ENCODE measurements at regions of chr2 and their contacts with region 1.

Region 1: DNA sequence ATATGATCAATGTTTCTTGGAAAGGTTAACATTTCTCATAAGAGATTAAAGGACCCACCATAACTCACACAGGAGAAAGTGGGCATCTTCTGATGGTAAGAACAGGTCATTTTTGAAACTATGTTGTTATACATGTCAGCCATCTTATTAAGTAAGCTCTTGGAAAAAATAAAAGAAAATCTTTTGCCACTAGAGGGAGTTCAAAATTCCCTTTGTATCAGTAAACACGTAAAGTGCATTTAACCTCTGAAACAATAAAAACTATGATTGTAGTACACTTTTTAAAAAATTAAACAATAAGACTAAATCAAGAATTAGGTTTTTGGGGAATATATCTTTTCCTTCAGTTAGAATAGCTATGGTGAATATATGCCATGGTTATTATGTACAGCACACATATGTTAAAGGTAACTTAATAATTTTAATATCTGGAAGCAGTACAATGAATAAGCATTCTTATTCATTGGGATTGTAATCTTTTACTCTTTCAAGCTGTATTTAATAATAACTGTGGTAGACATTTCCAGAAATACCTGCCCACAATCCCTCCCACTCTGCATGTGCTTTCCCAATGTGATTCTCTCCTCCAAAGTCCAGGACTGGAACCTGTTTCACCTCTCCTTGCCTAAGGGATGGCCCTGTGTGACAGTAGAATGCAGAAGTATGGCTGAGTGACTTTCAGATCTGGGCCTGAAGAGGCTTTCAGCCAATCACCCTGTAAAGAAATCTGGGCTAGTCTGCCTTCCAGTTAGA is 64.2 kb downstream of the RBMS1 start:
- DNase-seq: peak in 6 of 9 donors; percentile 44 to 67 (median 58)
- ATAC-seq: peak; percentile 70
- H3K4me3 ChIP-seq: no peak overlapping the region
- H3K4me3 Mint-ChIP-seq: peak overlapping the region in 6 of 10 donors; percentile 7 to 94 (median 30)
- H3K27ac ChIP-seq: peak overlapping the region; percentile 69
- H3K27ac Mint-ChIP-seq: peak overlapping the region; percentile 51 to 93 (median 89)
- H3K4me1 ChIP-seq: peaks cover 33 to 35% of the 10 kb centered on the region in 2 donors
- H3K4me1 Mint-ChIP-seq: peaks cover 32 to 91% (median 74%) of the 10 kb centered on the region in 7 donors
- H3K27me3 ChIP-seq: no peaks in the 10 kb centered on the region
- H3K27me3 Mint-ChIP-seq: no peaks in the 10 kb centered on the region

Region 2: DNA sequence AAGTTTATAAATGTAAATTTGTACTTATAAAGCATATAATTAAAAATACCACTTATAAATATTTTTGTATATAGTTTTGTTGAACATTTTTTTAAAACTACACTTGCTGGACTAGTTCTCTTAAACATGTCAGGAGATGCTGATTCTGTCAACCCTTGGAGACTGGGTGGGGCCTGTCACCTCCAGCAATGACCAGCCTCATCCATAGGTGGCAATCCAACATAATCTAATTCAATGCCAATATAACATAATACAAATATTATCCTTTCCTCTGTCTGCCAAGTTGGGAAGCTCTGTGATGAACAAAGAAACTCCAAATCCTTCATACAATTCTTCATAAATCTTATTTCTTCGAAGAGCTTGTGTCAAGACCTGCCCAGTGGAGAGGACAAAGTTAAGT is 76.3 kb before region 1 on chr2:
- CTCF ChIA-PET with region 1: interaction called, 8 read pairs
- POLR2A ChIA-PET with region 1: no interaction called
- intact Hi-C with region 1: loop called in 1 of 2 experiments (anchors 5 kb)
- DNase-seq: peak in 6 of 9 donors; percentile 14 to 45 (median 24)
- ATAC-seq: peak; percentile 72
- H3K4me3 ChIP-seq: no peak overlapping the region
- H3K4me3 Mint-ChIP-seq: peak overlapping the region in 1 of 10 donors; percentile 36
- H3K27ac ChIP-seq: no peak overlapping the region
- H3K27ac Mint-ChIP-seq: peak overlapping the region in 4 of 9 donors; percentile 51 to 81 (median 66)
- H3K4me1 ChIP-seq: peaks cover 0 to 5% of the 10 kb centered on the region in 2 donors
- H3K4me1 Mint-ChIP-seq: peaks cover 47 to 91% (median 83%) of the 10 kb centered on the region in 7 donors
- H3K27me3 ChIP-seq: no peaks in the 10 kb centered on the region
- H3K27me3 Mint-ChIP-seq: no peaks in the 10 kb centered on the region

Region 3: DNA sequence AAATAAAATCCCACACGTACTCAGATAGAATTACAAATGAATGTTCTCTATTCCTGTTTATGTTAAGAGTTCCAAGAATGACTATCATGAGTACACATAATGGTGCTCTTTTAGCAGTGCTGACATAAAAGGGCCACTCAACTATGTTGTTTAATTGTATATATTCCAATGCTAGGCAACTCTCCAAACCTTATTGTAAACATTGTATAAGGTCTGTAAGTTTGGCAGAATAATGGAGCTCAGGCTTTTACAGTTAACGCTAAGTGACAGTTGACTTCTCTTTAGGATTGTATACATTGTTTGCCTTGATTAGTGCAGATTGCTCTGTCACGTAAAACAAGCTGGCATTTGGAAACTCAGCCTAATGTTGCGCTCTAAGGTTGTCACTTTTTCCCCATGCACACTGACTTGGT is 43.4 kb after region 1 on chr2:
- CTCF ChIA-PET with region 1: interaction called, 4 read pairs
- POLR2A ChIA-PET with region 1: interaction called, 5 read pairs
- intact Hi-C with region 1: loop called in 1 of 2 experiments (anchors 2 kb)
- DNase-seq: peak in 1 of 9 donors; percentile 19
- ATAC-seq: no peak
- H3K4me3 ChIP-seq: no peak overlapping the region
- H3K4me3 Mint-ChIP-seq: peak overlapping the region in 9 of 10 donors; percentile 40 to 77 (median 64)
- H3K27ac ChIP-seq: peak overlapping the region; percentile 70
- H3K27ac Mint-ChIP-seq: peak overlapping the region; percentile 78 to 98 (median 90)
- H3K4me1 ChIP-seq: peaks cover 0 to 56% of the 10 kb centered on the region in 2 donors
- H3K4me1 Mint-ChIP-seq: peaks cover 22 to 96% (median 88%) of the 10 kb centered on the region in 7 donors
- H3K27me3 ChIP-seq: no peaks in the 10 kb centered on the region
- H3K27me3 Mint-ChIP-seq: no peaks in the 10 kb centered on the region

Region 4: DNA sequence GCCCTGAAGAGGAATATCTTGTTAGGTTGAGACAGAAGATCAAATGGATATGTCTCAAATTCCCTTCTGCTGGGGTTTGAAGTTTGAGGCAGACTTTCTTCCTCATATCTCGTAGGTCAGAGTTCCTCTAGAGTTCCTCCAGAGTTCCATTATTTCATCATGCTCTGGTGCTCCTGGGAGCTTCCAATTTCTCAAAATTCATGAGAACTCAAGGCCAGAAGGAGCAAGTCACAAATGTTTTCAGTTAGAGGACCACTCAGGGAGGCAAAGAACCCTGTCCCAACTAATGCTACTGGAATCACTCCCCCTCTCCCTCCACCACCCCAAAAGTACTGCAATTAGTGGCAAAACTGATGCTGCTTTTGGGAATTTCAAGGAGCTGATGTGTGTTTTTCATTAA is 179.9 kb after region 1 on chr2:
- CTCF ChIA-PET with region 1: no interaction called
- POLR2A ChIA-PET with region 1: no interaction called
- intact Hi-C with region 1: loop called in 1 of 2 experiments (anchors 5 kb)
- DNase-seq: no peak
- ATAC-seq: no peak
- H3K4me3 ChIP-seq: no peak overlapping the region
- H3K4me3 Mint-ChIP-seq: peak overlapping the region in 5 of 10 donors; percentile 20 to 76 (median 55)
- H3K27ac ChIP-seq: no peak overlapping the region
- H3K27ac Mint-ChIP-seq: no peak overlapping the region
- H3K4me1 ChIP-seq: peaks cover 0 to 26% of the 10 kb centered on the region in 2 donors
- H3K4me1 Mint-ChIP-seq: peaks cover 7 to 77% (median 60%) of the 10 kb centered on the region in 7 donors
- H3K27me3 ChIP-seq: no peaks in the 10 kb centered on the region
- H3K27me3 Mint-ChIP-seq: peaks cover 0 to 4% (median 0%) of the 10 kb centered on the region in 5 donors

Region 5: DNA sequence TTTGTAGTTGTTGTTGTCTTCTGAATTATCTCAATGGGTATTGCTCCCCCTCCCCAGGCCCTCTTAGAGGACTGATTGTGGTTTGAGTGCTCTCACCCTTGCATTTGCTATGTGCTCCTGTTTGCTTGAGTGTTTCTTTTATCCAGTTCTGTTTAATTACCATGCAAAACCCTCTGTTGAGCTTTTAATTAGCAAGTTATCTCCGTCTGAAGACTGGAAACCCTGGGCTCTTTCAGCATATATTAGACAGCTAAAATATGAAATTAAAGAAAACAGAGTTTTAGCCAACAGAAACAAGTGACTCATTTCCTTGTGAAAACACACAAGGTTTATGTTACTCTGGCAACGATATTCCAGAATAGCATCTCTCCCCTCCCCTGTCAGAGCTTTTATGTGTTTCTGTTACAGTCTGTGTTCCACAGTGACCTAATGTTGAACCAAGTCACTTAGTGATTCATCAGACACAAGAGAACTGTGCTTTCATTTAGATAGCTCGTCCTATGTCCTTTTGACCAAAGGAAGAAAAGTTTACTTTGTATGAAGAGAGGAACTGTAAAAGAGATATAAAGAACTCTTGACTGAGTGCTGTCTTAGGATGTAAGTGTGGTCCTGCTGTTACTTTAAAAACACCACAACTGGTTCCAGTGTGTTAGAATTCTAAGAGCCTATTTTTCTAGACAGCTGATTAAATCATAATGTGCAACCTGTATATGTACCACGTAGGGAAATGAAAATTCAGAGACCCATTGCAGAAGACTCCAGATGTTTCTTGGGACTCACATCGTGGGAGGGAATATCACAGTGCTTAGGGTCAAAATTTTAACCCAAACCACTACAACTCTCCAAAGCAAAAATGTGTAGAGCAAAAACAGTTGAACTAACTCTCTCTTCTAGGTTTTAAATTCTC is 237.0 kb after region 1 on chr2:
- CTCF ChIA-PET with region 1: no interaction called
- POLR2A ChIA-PET with region 1: no interaction called
- intact Hi-C with region 1: loop called in 1 of 2 experiments (anchors 5 kb)
- DNase-seq: peak in 2 of 9 donors; percentile 1 to 10
- ATAC-seq: peak; percentile 89
- H3K4me3 ChIP-seq: no peak overlapping the region
- H3K4me3 Mint-ChIP-seq: peak overlapping the region in 5 of 10 donors; percentile 2 to 35 (median 2)
- H3K27ac ChIP-seq: no peak overlapping the region
- H3K27ac Mint-ChIP-seq: peak overlapping the region in 4 of 9 donors; percentile 7 to 64 (median 39)
- H3K4me1 ChIP-seq: peaks cover 0 to 8% of the 10 kb centered on the region in 2 donors
- H3K4me1 Mint-ChIP-seq: peaks cover 4 to 19% (median 18%) of the 10 kb centered on the region in 7 donors
- H3K27me3 ChIP-seq: no peaks in the 10 kb centered on the region
- H3K27me3 Mint-ChIP-seq: no peaks in the 10 kb centered on the region

Region 6: GRCh38 chr2:160970052-160970965 is 540.9 kb after region 1 on chr2:
- CTCF ChIA-PET with region 1: no interaction called
- POLR2A ChIA-PET with region 1: no interaction called
- intact Hi-C with region 1: loop called in 1 of 2 experiments (anchors 1 kb)
- DNase-seq: peak in 5 of 9 donors; percentile 14 to 38 (median 27)
- ATAC-seq: peak; percentile 36
- H3K4me3 ChIP-seq: no peak overlapping the region
- H3K4me3 Mint-ChIP-seq: peak overlapping the region in 1 of 10 donors; percentile 27
- H3K27ac ChIP-seq: no peak overlapping the region
- H3K27ac Mint-ChIP-seq: no peak overlapping the region
- H3K4me1 ChIP-seq: no peaks in the 10 kb centered on the region
- H3K4me1 Mint-ChIP-seq: peaks cover 0 to 4% (median 0%) of the 10 kb centered on the region in 7 donors
- H3K27me3 ChIP-seq: peaks cover 0 to 3% of the 10 kb centered on the region in 2 donors
- H3K27me3 Mint-ChIP-seq: peaks cover 0 to 26% (median 0%) of the 10 kb centered on the region in 5 donors

Measured in naive thymus-derived CD4-positive, alpha-beta T cell (primary cell).